Sigmoid colon (tissue), 7 donors: ENCODE measurements at regions of chr22 and their contacts with region 1.

Region 1: DNA sequence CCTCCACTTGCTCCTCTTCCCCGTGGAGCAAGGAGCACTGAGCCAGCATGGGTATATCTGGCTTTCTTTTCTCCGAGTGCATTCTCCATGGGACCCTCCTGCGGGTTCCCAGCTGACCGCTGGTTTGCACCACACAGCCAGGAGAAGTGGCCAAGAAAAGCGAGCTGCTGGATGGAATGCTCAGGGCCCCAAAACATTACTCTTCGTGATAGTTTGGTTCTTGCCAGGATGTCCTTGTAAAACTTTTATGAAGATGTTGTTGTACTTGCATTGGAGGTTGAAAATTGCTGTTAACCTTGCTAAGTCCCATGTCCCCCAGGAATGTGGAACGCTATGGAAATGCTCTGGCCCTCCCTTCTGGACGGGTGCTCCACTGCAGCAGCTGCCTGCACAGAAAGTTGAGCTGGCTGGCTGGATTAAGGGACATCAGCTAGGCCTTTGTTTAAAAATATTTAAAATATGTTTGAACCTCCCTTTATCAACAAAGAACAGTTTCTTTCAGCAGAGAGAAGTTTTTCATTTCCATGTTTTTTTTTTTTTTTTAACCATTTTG is 68.7 kb downstream of the ZNRF3 start:
- DNase-seq: peak; percentile 82
- H3K4me3 ChIP-seq: no peak overlapping the region
- H3K27ac ChIP-seq: peak overlapping the region; percentile 58 to 73 (median 68)
- H3K4me1 ChIP-seq: peaks cover 0 to 65% (median 58%) of the 10 kb centered on the region in 4 donors
- H3K27me3 ChIP-seq: no peaks in the 10 kb centered on the region
- CTCF ChIP-seq: peak in 2 of 4 experiments; percentile 27 to 42
- EP300 ChIP-seq: peak in 1 of 4 donors; percentile 56
- POLR2A ChIP-seq: no peak

Region 2: GRCh38 chr22:28855355-28856094 is 96.5 kb before region 1 on chr22:
- intact Hi-C with region 1: loop called (anchors 2 kb)
- DNase-seq: peak; percentile 68
- H3K4me3 ChIP-seq: no peak overlapping the region
- H3K27ac ChIP-seq: no peak overlapping the region
- H3K4me1 ChIP-seq: peaks cover 0 to 7% (median 3%) of the 10 kb centered on the region in 4 donors
- H3K27me3 ChIP-seq: no peaks in the 10 kb centered on the region
- CTCF ChIP-seq: peak; percentile 88 to 97 (median 94)
- EP300 ChIP-seq: no peak
- POLR2A ChIP-seq: no peak

Region 3: GRCh38 chr22:28882878-28883656 is 69.0 kb before region 1 on chr22 and contains the start of gene ZNRF3:
- intact Hi-C with region 1: loop called (anchors 1 kb)
- DNase-seq: peak; percentile 97
- H3K4me3 ChIP-seq: peak within 1 kb of the TSS; percentile 49 to 71 (median 64)
- H3K27ac ChIP-seq: peak within 1 kb of the TSS; percentile 77 to 87 (median 80)
- H3K4me1 ChIP-seq: peaks cover 0 to 46% (median 36%) of the 10 kb centered on the region in 4 donors
- H3K27me3 ChIP-seq: no peaks in the 10 kb centered on the region
- CTCF ChIP-seq: no peak
- EP300 ChIP-seq: no peak
- POLR2A ChIP-seq: no peak
- total RNA-seq, gene ZNRF3: 8.9 to 13.6 (median 9.7) TPM

Region 4: GRCh38 chr22:28917747-28918549 is 34.1 kb before region 1 on chr22:
- intact Hi-C with region 1: loop called (anchors 5 kb)
- DNase-seq: peak; percentile 67
- H3K4me3 ChIP-seq: peak overlapping the region in 1 of 4 donors; percentile 5
- H3K27ac ChIP-seq: peak overlapping the region; percentile 78 to 83 (median 79)
- H3K4me1 ChIP-seq: peaks cover 0 to 75% (median 45%) of the 10 kb centered on the region in 4 donors
- H3K27me3 ChIP-seq: no peaks in the 10 kb centered on the region
- CTCF ChIP-seq: no peak
- EP300 ChIP-seq: no peak
- POLR2A ChIP-seq: no peak

Region 5: DNA sequence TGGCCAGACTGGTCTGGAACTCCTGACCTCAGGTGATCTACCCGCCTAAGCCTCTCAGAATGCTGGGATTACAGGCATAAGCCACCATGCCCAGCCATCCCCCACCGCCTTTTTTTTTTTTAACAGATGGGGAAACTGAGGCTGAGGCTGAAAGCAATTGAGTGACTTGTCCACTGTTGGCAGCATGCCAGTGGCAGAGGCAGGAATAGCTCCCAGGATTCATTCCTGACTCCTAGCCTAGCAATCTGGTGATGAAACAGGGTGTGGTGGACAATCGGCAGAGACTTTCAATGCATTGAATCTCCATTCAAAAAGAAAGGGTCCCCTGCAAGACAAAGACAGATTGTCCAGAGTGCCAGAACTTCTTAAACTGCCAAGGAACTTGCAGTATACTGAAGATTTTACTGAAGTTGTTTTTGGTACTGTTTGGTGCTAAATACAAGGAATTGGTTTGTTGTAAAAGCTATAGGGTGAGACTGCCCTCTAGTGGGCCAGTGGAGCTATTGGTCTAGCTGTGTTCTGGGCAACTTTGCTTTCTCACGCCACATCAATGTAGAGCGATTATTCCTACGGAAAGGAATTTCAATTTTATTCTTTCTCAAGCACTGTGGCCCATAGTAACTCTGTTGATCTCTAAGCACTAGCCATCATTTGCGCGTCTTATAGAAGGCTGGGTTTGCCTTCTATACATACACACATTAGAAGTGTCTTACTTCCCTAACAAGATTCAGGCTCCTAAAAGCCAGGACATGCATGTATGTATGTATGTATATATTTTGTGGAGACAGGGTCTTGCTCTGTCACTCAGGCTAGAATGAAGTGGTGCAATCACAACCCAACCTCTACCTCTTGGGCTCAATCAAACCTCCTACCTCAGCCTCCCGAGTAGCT is 88.6 kb after region 1 on chr22:
- intact Hi-C with region 1: loop called (anchors 2 kb)
- DNase-seq: peak; percentile 81
- H3K4me3 ChIP-seq: no peak overlapping the region
- H3K27ac ChIP-seq: no peak overlapping the region
- H3K4me1 ChIP-seq: peaks cover 0 to 21% (median 15%) of the 10 kb centered on the region in 4 donors
- H3K27me3 ChIP-seq: no peaks in the 10 kb centered on the region
- CTCF ChIP-seq: peak; percentile 87 to 97 (median 94)
- EP300 ChIP-seq: no peak
- POLR2A ChIP-seq: no peak